ENCODE measurements at regions of chr3 and their contacts with region 1.

Region 1: DNA sequence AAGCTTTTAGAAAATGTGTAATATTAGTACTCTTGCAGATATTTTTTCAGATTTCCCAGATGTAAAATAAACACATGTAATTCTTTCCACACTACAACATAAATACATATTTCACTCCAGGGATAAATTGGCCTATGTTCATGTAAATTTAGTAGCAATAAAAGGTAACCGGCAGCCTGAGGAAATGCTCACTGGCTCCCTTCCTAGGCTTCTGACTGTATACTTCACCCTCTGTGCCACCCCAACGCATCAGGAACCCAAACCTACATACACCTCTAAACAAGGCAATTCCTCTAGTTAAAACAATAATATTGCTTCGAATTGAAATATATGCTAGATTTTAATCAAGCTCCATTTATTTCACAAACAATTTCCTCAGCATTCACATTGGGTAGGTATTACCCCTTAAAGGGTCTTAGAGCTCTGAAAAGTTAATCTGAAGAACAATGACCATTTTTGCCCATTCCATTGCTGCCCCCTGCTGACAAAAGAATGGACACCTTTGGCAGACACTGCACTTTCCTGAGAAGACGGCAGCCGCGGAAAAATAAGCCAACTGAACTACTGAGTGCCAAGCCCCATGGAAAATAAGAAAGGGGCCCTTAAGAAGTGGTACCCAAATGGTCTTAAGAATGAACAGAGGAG is 212.5 kb downstream of the OSBPL10 start:
- DNase-seq: peak; percentile 66
- H3K4me3 Mint-ChIP-seq: no peak overlapping the region
- H3K27ac Mint-ChIP-seq: peak overlapping the region; percentile 28
- H3K4me1 Mint-ChIP-seq: peaks cover 58% of the 10 kb centered on the region
- H3K27me3 Mint-ChIP-seq: peaks cover 4% of the 10 kb centered on the region

Region 2: DNA sequence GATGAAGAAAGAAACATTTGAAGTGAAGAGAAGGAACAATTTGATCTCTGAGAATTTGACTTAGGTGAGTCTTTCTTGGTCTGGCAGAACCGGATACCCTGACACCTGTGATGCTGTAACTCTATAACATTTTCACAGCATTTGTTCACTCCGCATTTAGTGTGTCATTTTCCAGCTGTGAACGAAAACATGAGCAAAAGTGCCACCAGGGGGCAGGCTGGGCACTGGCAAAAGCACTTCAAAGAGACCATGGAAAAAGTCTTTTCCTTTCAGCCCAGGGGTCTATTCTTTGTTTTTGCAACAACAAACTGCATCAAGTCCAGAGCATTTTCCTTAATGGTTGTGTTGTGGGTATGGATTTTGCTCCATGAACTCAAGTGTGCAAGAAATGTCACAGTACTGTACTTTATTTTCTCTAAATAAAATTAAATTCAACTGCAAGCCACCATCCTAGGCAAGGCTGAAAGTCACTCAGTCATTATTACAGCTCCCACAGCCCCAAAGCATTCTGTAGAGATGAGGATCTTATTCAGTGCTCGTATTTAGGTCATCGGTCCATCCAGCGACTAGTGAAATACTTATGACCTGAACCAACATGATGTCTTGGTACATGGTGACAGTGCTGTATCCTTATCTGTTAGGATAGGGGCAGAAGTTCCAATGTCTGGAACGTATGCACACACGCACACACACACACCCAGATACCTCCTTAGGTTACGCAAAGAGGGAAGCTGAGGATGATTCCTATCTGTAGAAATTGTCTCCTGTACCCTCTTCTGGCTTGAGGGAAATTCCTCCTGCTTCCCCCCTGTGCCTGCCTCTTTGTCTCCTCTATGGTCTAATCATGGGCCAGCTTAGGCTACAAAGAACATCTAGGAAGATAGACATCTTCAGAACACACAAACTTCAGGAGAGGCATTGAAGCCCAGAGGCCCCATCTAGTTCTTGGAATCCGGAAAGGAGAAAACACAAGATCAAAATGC is 999.6 kb before region 1 on chr3:
- CTCF ChIA-PET with region 1: interaction called, 4 read pairs
- POLR2A ChIA-PET with region 1: no interaction called
- intact Hi-C with region 1: loop called (anchors 5 kb)
- DNase-seq: peak; percentile 81
- H3K4me3 Mint-ChIP-seq: no peak overlapping the region
- H3K27ac Mint-ChIP-seq: no peak overlapping the region
- H3K4me1 Mint-ChIP-seq: no peaks in the 10 kb centered on the region
- H3K27me3 Mint-ChIP-seq: peaks cover 7% of the 10 kb centered on the region

Region 3: DNA sequence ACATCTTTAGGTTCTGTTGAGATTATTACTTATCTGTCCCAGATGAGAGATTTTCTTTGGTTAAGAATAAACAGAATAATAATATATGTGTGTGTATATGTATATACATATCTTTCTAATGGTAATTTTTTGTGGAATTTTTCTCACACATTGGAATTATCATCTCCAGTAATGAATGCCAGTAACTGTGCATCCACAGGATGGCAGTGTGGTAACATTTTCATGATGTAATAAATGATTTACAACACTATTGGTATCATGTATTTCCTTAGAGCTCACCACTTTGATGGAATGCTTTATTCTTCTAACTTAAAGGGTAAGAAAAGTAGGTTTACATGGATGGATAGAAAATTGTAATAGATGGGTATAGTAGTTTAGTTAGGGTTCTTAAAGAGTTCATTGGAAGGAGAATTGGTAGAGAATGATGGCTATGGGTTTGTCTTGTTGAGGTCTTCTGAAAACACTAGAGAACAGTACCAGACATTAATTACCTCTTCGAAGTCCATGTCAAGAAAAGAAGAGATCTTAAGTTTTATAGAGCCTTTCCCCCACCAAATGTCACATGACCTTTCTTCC is 157.8 kb before region 1 on chr3:
- CTCF ChIA-PET with region 1: interaction called, 3 read pairs
- POLR2A ChIA-PET with region 1: no interaction called
- intact Hi-C with region 1: loop called (anchors 2 kb)
- DNase-seq: no peak
- H3K4me3 Mint-ChIP-seq: no peak overlapping the region
- H3K27ac Mint-ChIP-seq: no peak overlapping the region
- H3K4me1 Mint-ChIP-seq: peaks cover 69% of the 10 kb centered on the region
- H3K27me3 Mint-ChIP-seq: no peaks in the 10 kb centered on the region

Region 4: DNA sequence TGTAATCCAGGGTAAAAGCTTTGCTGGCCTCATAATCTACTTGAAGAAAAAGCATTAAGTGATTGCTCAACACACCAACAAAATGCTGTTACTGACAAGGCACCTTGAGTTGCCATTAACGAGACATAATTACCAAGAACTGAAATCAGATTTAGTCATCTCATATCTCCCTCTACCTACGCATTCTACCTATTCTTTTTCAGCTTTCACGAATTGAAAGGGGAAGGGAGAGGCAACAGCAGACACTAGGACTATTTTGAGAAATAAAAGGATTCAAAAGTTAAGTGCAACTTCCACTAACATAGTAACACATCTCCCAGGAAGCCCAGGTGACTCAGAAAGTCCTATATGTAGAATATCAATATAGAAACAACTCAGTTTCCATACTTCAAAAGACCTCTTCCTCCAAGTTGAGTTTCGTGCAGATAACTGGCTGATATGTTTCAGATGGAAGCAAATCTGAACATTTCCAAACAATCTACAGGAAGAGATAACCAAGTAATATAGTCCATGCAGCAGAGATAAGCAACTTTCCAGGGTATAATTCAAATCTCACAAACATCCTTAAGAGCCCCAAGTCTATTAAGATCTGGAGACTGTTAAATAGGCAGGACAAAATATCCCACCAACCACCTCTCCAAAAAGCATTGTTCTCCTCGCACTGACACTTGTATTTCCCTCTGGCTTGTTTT is 210.6 kb after region 1 on chr3:
- CTCF ChIA-PET with region 1: no interaction called
- POLR2A ChIA-PET with region 1: no interaction called
- intact Hi-C with region 1: loop called (anchors 1 kb)
- DNase-seq: no peak
- H3K4me3 Mint-ChIP-seq: peak overlapping the region; percentile 57
- H3K27ac Mint-ChIP-seq: peak overlapping the region; percentile 50
- H3K4me1 Mint-ChIP-seq: peaks cover 28% of the 10 kb centered on the region
- H3K27me3 Mint-ChIP-seq: peaks cover 62% of the 10 kb centered on the region

Region 5: DNA sequence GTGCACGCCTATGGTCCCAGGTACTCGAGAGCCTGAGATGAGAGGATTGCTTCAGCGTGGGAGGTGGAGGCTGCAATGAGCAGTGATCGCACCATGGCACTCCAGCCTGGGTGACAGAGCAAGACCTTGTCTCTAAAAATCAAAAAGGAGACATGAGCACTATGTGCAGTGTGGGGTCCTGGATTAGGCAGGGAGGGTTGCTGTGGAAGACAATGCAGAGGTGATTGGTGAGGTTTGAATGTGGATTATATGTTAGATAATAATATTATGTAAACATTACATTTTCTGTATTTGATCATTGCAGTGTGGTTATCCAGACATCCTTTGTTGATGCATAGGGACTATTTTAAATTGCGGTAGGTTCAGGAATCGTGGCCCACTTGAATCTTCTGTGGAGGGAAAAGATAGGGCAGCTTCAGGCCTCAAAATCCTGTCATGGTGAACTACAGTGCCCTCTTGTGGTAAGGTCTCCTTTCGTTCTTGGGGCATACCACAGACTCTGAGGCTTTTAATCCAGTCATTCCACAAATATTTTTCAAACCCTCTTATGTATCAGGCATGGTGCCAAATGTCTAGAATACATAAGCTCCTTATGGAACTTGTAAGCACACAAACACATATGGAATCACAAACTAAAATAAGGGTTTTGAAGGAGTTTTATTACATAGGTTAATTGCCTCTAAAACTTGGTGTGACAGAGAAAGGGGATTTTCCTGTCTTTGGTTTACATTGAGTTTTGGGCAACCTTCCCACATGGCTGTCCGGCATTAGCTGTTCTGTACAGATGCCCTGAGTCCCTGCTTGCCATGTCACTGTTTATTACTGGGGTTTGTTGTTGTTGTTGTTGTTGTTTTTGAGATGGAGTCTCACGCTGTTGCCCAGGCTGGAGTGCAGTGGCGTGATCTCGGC is 375.5 kb after region 1 on chr3:
- CTCF ChIA-PET with region 1: no interaction called
- POLR2A ChIA-PET with region 1: no interaction called
- intact Hi-C with region 1: loop called (anchors 5 kb)
- DNase-seq: peak; percentile 51
- H3K4me3 Mint-ChIP-seq: no peak overlapping the region
- H3K27ac Mint-ChIP-seq: no peak overlapping the region
- H3K4me1 Mint-ChIP-seq: no peaks in the 10 kb centered on the region
- H3K27me3 Mint-ChIP-seq: no peaks in the 10 kb centered on the region

Measured in activated CD4-positive, alpha-beta memory T cell treated with anti-CD3 and anti-CD28 coated beads for 36 hours (primary cell).